Naive thymus-derived CD4-positive, alpha-beta T cell (primary cell): ENCODE measurements at regions of chr1 and their contacts with region 1.

Region 1: GRCh38 chr1:111274653-111275052 is 16.0 kb upstream of the CHIA start:
- DNase-seq: no peak
- ATAC-seq: no peak
- H3K4me3 ChIP-seq: no peak overlapping the region
- H3K4me3 Mint-ChIP-seq: peak overlapping the region in 1 of 10 donors; percentile 24
- H3K27ac ChIP-seq: no peak overlapping the region
- H3K27ac Mint-ChIP-seq: peak overlapping the region in 1 of 9 donors; percentile 11
- H3K4me1 ChIP-seq: no peaks in the 10 kb centered on the region
- H3K4me1 Mint-ChIP-seq: peaks cover 8 to 29% (median 13%) of the 10 kb centered on the region in 7 donors
- H3K27me3 ChIP-seq: peaks cover 5 to 6% of the 10 kb centered on the region in 2 donors
- H3K27me3 Mint-ChIP-seq: peaks cover 10 to 35% (median 29%) of the 10 kb centered on the region in 5 donors

Region 2: DNA sequence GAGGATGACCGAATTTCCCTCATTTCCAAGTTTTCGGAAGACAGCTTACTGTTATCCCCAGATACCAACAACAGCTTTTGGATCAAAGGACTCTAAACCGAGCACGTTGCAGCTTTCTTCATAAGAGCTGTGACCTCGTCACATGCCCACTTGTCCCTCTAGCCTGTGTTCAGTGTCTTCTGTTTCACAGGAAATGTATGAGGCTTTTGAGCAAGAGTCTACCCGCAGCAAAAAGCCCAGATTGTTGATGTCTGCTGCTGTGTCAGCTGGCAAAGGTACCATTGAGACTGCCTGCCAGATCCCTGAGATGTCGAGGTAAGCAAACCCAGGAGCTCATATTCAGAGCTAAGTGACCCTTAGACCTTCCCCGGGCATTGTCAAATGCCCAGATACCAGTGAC is 23.1 kb before region 1 on chr1:
- CTCF ChIA-PET with region 1: no interaction called
- POLR2A ChIA-PET with region 1: interaction called, 3 read pairs
- intact Hi-C with region 1: loop called in 1 of 2 experiments (anchors 2 kb)
- DNase-seq: peak in 7 of 9 donors; percentile 25 to 54 (median 37)
- ATAC-seq: peak; percentile 82
- H3K4me3 ChIP-seq: no peak overlapping the region
- H3K4me3 Mint-ChIP-seq: peak overlapping the region in 6 of 10 donors; percentile 7 to 56 (median 24)
- H3K27ac ChIP-seq: peak overlapping the region; percentile 6
- H3K27ac Mint-ChIP-seq: peak overlapping the region; percentile 57 to 95 (median 67)
- H3K4me1 ChIP-seq: peaks cover 4 to 10% of the 10 kb centered on the region in 2 donors
- H3K4me1 Mint-ChIP-seq: peaks cover 9 to 45% (median 39%) of the 10 kb centered on the region in 7 donors
- H3K27me3 ChIP-seq: no peaks in the 10 kb centered on the region
- H3K27me3 Mint-ChIP-seq: peaks cover 0 to 8% (median 0%) of the 10 kb centered on the region in 5 donors

Region 3: GRCh38 chr1:111719674-111720132 is 445.1 kb after region 1 on chr1:
- CTCF ChIA-PET with region 1: no interaction called
- POLR2A ChIA-PET with region 1: no interaction called
- intact Hi-C with region 1: no loop called
- DNase-seq: no peak
- ATAC-seq: no peak
- H3K4me3 ChIP-seq: no peak overlapping the region
- H3K4me3 Mint-ChIP-seq: no peak overlapping the region
- H3K27ac ChIP-seq: no peak overlapping the region
- H3K27ac Mint-ChIP-seq: peak overlapping the region in 2 of 9 donors; percentile 31 to 52
- H3K4me1 ChIP-seq: peaks cover 0 to 8% of the 10 kb centered on the region in 2 donors
- H3K4me1 Mint-ChIP-seq: peaks cover 11 to 31% (median 17%) of the 10 kb centered on the region in 7 donors
- H3K27me3 ChIP-seq: no peaks in the 10 kb centered on the region
- H3K27me3 Mint-ChIP-seq: no peaks in the 10 kb centered on the region